WTC11 (cell line): ENCODE measurements at regions of chr20 and their contacts with region 1.

Region 1: GRCh38 chr20:2005831-2006426 is 12.1 kb upstream of the PDYN start:
- DNase-seq: peak; percentile 90
- ATAC-seq: peak; percentile 50; the same call in 1 of the 2 replicates
- H3K4me3 Mint-ChIP-seq: no peak overlapping the region
- H3K27ac Mint-ChIP-seq: no peak overlapping the region
- H3K4me1 Mint-ChIP-seq: peaks cover 10% of the 10 kb centered on the region; the same call in 1 of the 2 replicates
- H3K27me3 Mint-ChIP-seq: peaks cover 20% of the 10 kb centered on the region
- CTCF ChIP-seq: no peak

Region 2: GRCh38 chr20:1946762-1947534 is 59.0 kb before region 1 on chr20:
- CTCF ChIA-PET with region 1: interaction called, 10 read pairs
- POLR2A ChIA-PET with region 1: no interaction called
- DNase-seq: peak; percentile 90
- ATAC-seq: peak; percentile 81
- H3K4me3 Mint-ChIP-seq: peak overlapping the region; percentile 72
- H3K27ac Mint-ChIP-seq: peak overlapping the region; percentile 75
- H3K4me1 Mint-ChIP-seq: peaks cover 64% of the 10 kb centered on the region
- H3K27me3 Mint-ChIP-seq: peaks cover 42% of the 10 kb centered on the region
- CTCF ChIP-seq: no peak

Region 3: DNA sequence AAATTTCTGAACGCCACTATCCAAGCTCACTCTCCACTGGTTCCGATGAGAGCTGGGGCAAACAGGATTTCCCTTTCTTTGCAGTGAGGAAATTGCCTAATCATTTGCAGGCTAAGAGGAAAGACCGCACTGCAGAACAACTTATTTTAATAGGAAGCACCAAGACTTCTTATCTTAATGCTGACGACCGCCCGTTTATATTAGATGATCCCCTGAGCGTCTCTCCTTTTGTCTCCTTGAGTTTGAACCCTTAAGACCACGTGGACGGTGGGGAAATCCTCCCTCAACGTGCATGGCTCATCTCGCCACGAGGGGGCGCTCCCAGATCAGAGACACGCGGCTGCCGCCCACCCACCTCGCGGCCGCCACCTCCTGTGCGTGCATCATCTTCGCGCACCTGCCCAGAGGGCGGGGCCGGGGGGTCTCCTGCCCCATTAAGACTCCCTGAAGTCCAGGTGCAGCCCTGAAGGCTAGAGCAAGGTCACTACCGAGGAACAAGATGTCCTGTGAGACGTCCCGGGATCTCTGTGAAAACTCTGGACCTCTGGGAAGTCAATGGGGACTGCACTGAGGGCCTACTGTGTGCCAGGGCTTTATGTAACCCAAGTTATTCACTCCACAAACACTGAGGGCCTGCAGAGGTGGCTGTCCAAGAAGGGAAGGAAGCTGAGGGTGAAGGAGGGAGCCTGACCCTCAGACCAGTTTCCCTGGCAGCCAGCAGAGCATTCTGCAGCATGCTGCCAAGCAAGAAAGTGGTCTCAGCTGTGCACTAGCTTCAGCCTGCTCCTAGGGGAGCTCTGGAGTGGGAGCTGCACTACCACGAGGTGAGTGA is 40.2 kb before region 1 on chr20:
- CTCF ChIA-PET with region 1: interaction called, 10 read pairs
- POLR2A ChIA-PET with region 1: no interaction called
- DNase-seq: peak; percentile 89
- ATAC-seq: peak; percentile 70
- H3K4me3 Mint-ChIP-seq: peak overlapping the region; percentile 58
- H3K27ac Mint-ChIP-seq: no peak overlapping the region
- H3K4me1 Mint-ChIP-seq: peaks cover 36% of the 10 kb centered on the region
- H3K27me3 Mint-ChIP-seq: peaks cover 22% of the 10 kb centered on the region
- CTCF ChIP-seq: peak; percentile 89

Region 4: DNA sequence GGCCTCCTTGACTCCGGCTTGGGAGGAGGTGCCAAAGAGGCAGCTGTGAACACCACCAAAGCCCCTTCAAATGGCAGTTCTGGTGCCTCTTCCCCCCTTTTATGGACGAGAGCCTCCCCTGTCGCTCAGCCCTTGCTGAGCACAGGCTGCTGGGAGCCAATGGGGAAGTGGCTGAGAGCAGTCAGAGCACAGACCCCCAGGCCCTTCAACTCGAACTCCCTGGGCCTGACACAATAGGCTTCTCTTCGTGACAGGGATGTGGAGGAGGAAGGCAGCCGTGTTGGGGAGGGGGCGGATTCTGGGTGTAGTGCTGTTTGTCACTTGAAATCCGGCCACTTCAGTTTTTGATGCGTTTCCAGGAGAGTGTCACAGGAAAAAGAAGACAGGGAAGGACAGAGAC is 11.9 kb before region 1 on chr20 and contains the start of gene PDYN:
- CTCF ChIA-PET with region 1: interaction called, 13 read pairs
- POLR2A ChIA-PET with region 1: no interaction called
- DNase-seq: no peak
- ATAC-seq: peak; percentile 77
- H3K4me3 Mint-ChIP-seq: no peak within 1 kb of the TSS
- H3K27ac Mint-ChIP-seq: no peak within 1 kb of the TSS
- H3K4me1 Mint-ChIP-seq: peaks cover 41% of the 10 kb centered on the region
- H3K27me3 Mint-ChIP-seq: peaks cover 5% of the 10 kb centered on the region
- CTCF ChIP-seq: no peak
- total RNA-seq, gene PDYN: 0.14 to 0.28 TPM (median 0.21 TPM) in 3 replicates

Region 5: GRCh38 chr20:2022163-2022562 is 16.2 kb after region 1 on chr20:
- CTCF ChIA-PET with region 1: interaction called, 14 read pairs
- POLR2A ChIA-PET with region 1: no interaction called
- DNase-seq: no peak
- ATAC-seq: no peak
- H3K4me3 Mint-ChIP-seq: no peak overlapping the region
- H3K27ac Mint-ChIP-seq: no peak overlapping the region
- H3K4me1 Mint-ChIP-seq: no peaks in the 10 kb centered on the region
- H3K27me3 Mint-ChIP-seq: peaks cover 2% of the 10 kb centered on the region; the same call in 1 of the 2 replicates
- CTCF ChIP-seq: no peak

Region 6: GRCh38 chr20:2093159-2093781 is 87.3 kb after region 1 on chr20:
- CTCF ChIA-PET with region 1: interaction called, 21 read pairs
- POLR2A ChIA-PET with region 1: no interaction called
- DNase-seq: peak; percentile 71
- ATAC-seq: peak; percentile 67
- H3K4me3 Mint-ChIP-seq: no peak overlapping the region
- H3K27ac Mint-ChIP-seq: no peak overlapping the region
- H3K4me1 Mint-ChIP-seq: peaks cover 16% of the 10 kb centered on the region
- H3K27me3 Mint-ChIP-seq: no peaks in the 10 kb centered on the region; the same call in 1 of the 2 replicates
- CTCF ChIP-seq: peak; percentile 47; the same call in 1 of the 2 replicates